ENCODE measurements at regions of chr2 and their contacts with region 1.

Region 1: DNA sequence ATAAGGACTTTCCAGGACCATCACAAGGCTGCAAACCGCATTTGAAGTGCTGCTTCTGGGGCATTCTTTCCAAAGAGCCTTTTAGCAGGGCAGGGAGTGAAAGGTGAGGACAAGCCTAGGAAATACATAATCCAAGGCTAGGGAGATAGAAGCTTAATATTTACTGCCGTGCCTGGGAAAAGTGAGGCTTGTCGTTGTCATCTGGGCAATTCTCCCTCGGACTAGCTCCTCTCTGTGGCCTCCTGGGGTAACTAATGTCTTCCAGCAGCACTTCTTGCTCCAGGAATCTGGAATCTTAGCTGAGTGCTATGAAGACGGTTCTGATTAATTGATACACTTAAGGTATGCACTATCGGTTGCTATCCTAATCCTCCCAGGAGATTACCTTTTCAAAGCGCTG is 69.3 kb upstream of the ATL2 start:
- DNase-seq: no peak
- H3K4me3 ChIP-seq: no peak overlapping the region
- H3K27ac ChIP-seq: no peak overlapping the region
- H3K4me1 ChIP-seq: peaks cover 4 to 28% (median 10%) of the 10 kb centered on the region in 4 experiments; a peak in 6 of 7 replicates
- H3K27me3 ChIP-seq: no peaks in the 10 kb centered on the region; a peak in 1 of 7 replicates
- CTCF ChIP-seq: peak in 2 of 3 experiments; percentile 13 to 14; a peak in 1 of 4 replicates
- EP300 ChIP-seq: no peak
- POLR2A ChIP-seq: no peak
- RAD21 ChIP-seq: peak; percentile 8 to 38; a peak in 1 of 4 replicates

Region 2: DNA sequence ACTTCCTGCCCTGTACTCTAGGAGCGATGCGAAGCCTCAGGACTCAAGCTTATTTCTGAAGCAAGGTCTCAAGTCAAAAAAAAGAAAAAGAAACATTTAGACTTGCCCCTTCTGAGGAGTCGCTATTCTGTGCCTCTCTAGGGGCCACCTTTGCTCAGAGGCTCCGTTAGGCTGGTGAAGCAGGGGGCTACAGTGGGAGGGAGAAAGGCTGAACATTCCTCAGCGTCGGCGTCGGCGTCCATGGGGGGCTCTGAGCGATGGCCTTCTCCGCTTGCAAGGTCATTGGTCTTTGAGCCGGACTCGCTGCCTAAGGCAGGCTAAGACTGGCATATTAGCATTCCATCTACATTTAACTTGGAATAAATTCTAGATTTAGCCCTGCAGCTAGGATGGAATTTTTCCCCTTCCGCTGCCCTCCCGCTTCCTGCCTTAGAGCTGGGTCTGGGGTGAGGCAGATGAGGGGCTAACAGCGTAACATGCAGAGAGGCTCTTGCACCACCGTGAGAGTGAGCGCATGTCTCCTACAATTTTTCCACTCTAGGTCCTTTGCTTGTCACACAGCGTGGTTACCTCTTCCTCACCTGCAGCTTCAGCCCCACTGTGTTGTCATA is 15.7 kb before region 1 on chr2:
- CTCF ChIA-PET with region 1: interaction called, 10 read pairs
- POLR2A ChIA-PET with region 1: interaction called, 3 read pairs
- DNase-seq: no peak
- H3K4me3 ChIP-seq: no peak overlapping the region
- H3K27ac ChIP-seq: no peak overlapping the region
- H3K4me1 ChIP-seq: peaks cover 5 to 25% (median 19%) of the 10 kb centered on the region in 4 experiments
- H3K27me3 ChIP-seq: no peaks in the 10 kb centered on the region
- CTCF ChIP-seq: no peak
- EP300 ChIP-seq: no peak
- POLR2A ChIP-seq: no peak
- RAD21 ChIP-seq: no peak

Region 3: GRCh38 chr2:38465789-38466127 is 19.3 kb after region 1 on chr2:
- CTCF ChIA-PET with region 1: interaction called, 16 read pairs
- POLR2A ChIA-PET with region 1: interaction called, 3 read pairs
- DNase-seq: peak; percentile 33 to 56
- H3K4me3 ChIP-seq: no peak overlapping the region
- H3K27ac ChIP-seq: no peak overlapping the region
- H3K4me1 ChIP-seq: no peaks in the 10 kb centered on the region
- H3K27me3 ChIP-seq: no peaks in the 10 kb centered on the region
- CTCF ChIP-seq: peak; percentile 48 to 91 (median 80)
- EP300 ChIP-seq: no peak
- POLR2A ChIP-seq: no peak
- RAD21 ChIP-seq: peak; percentile 79 to 88

Region 4: GRCh38 chr2:38515160-38516074 is 69.0 kb after region 1 on chr2:
- CTCF ChIA-PET with region 1: no interaction called
- POLR2A ChIA-PET with region 1: no interaction called
- DNase-seq: no peak
- H3K4me3 ChIP-seq: no peak overlapping the region
- H3K27ac ChIP-seq: no peak overlapping the region
- H3K4me1 ChIP-seq: no peaks in the 10 kb centered on the region; a peak in 2 of 7 replicates
- H3K27me3 ChIP-seq: no peaks in the 10 kb centered on the region
- CTCF ChIP-seq: no peak
- EP300 ChIP-seq: no peak
- POLR2A ChIP-seq: no peak
- RAD21 ChIP-seq: no peak

Measured in H1 (cell line).